OCI-LY7 (cell line): ENCODE measurements at regions of chr1 and their contacts with region 1.

Region 1: DNA sequence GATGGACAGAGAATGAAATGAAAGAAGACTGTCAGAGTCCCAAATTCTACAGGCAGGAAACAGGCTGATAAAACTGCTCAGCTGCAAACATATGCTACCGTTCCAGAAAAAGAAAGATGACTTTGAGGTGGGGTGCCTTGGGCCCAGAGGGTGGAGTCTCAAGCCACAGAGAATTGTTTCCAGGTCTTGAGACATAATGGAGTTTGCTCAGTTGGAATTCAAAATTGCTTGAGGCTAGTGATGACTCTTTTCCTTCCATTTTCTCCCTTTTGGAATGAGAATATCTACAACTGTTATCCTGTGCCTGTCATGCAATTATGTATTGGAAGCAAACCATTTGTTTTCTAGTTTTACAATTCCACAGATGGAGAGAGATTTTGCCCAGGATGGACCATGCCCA is 23.6 kb upstream of the PSEN2 start:
- DNase-seq: no peak
- H3K4me3 ChIP-seq: no peak overlapping the region
- H3K27ac ChIP-seq: no peak overlapping the region
- H3K4me1 ChIP-seq: peaks cover 4% of the 10 kb centered on the region
- CTCF ChIP-seq: no peak

Region 2: GRCh38 chr1:226831953-226832352 is 14.8 kb before region 1 on chr1:
- CTCF ChIA-PET with region 1: no interaction called
- POLR2A ChIA-PET with region 1: no interaction called
- intact Hi-C with region 1: no loop called
- DNase-seq: no peak
- H3K4me3 ChIP-seq: no peak overlapping the region
- H3K27ac ChIP-seq: no peak overlapping the region
- H3K4me1 ChIP-seq: peaks cover 15% of the 10 kb centered on the region
- CTCF ChIP-seq: no peak

Region 3: GRCh38 chr1:226882631-226883409 is 36.0 kb after region 1 on chr1:
- CTCF ChIA-PET with region 1: no interaction called
- POLR2A ChIA-PET with region 1: interaction called, 13 read pairs
- intact Hi-C with region 1: no loop called
- DNase-seq: peak; percentile 72
- H3K4me3 ChIP-seq: peak overlapping the region; percentile 55
- H3K27ac ChIP-seq: peak overlapping the region; percentile 70
- H3K4me1 ChIP-seq: peaks cover 45% of the 10 kb centered on the region
- CTCF ChIP-seq: no peak